Breast epithelium (tissue), 4 donors: ENCODE measurements at regions of chr17 and their contacts with region 1.

Region 1: GRCh38 chr17:35447499-35447898 is 1.1 kb downstream of the SLFN13 start:
- DNase-seq: no peak
- H3K4me3 ChIP-seq: peak overlapping the region in 2 of 3 donors; percentile 74 to 89
- H3K27ac ChIP-seq: peak overlapping the region; percentile 20 to 82
- H3K4me1 ChIP-seq: peaks cover 0 to 3% of the 10 kb centered on the region in 2 donors
- H3K27me3 ChIP-seq: no peaks in the 10 kb centered on the region
- CTCF ChIP-seq: no peak
- POLR2A ChIP-seq: no peak

Region 2: GRCh38 chr17:35404360-35404759 is 43.1 kb before region 1 on chr17:
- intact Hi-C with region 1: no loop called
- DNase-seq: no peak
- H3K4me3 ChIP-seq: no peak overlapping the region
- H3K27ac ChIP-seq: no peak overlapping the region
- H3K4me1 ChIP-seq: no peaks in the 10 kb centered on the region
- H3K27me3 ChIP-seq: no peaks in the 10 kb centered on the region
- CTCF ChIP-seq: no peak
- POLR2A ChIP-seq: no peak

Region 3: DNA sequence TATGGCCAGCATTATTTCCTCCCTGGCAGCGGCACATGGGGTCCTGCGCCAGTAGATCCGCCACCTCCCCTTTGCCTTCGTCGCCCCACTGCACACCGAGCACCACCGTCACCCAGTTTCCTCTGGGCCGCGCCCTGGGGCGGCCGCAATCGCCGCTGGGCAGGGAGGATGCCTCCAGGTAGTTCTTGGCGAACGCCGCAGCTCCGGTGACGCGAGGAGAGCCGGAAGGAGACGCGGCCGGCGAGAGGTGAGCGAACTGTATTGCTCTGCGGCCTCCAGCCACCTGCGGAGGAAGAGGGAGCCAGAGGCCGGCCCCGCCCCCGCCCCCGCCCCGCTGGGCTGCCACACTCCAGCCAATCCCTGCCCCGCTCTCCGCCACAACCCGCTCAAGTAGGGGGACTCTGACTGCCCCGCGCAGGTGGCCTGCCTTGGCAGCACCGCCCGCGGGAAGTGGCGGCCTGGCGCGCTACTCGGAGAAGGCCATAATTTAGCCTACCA is 12.9 kb after region 1 on chr17:
- intact Hi-C with region 1: loop called (anchors 1 kb)
- DNase-seq: peak; percentile 41 to 61
- H3K4me3 ChIP-seq: peak overlapping the region; percentile 17 to 58 (median 49)
- H3K27ac ChIP-seq: peak overlapping the region; percentile 27 to 64
- H3K4me1 ChIP-seq: no peaks in the 10 kb centered on the region
- H3K27me3 ChIP-seq: no peaks in the 10 kb centered on the region
- CTCF ChIP-seq: no peak
- POLR2A ChIP-seq: no peak